CD14-positive monocyte (primary cell): ENCODE measurements at regions of chr10 and their contacts with region 1.

Region 1: DNA sequence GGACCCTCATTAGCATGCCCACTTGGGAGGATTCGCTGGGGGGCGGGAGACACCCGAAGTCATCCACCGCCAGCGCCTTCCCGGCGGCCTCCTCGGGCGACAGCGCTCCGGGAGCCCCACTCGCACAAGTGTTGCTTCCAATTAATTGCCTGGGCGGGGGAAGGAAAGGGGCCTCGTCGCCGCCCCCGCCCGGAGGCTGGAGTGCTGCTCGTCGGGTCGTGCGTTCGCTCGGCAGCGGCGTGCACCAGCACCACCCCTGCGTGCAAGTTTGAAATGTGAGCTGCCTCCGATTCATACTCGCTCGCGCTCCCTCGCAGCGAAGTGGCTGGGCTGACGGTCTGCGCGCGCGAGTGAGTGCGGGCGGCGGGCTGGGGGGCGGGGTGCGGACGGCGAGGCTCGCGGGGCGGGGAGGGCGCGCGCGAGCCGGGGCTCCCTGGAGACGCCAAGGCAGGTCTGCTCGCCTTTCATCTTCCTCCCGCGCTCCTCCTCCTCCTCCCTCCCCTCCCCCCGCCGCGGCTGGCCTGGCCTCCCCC is 104.6 kb upstream of the PPIF start:
- DNase-seq: peak; percentile 49 to 68 (median 61)
- H3K4me3 ChIP-seq: peak overlapping the region; percentile 51 to 75 (median 57)
- H3K4me3 Mint-ChIP-seq: peak overlapping the region; percentile 68 to 79
- H3K27ac ChIP-seq: peak overlapping the region; percentile 87 to 95
- H3K27ac Mint-ChIP-seq: peak overlapping the region in 6 of 7 donors; percentile 8 to 98 (median 89)
- H3K4me1 ChIP-seq: peaks cover 82 to 88% of the 10 kb centered on the region in 2 donors
- H3K4me1 Mint-ChIP-seq: peaks cover 82% of the 10 kb centered on the region
- H3K27me3 ChIP-seq: no peaks in the 10 kb centered on the region
- H3K27me3 Mint-ChIP-seq: peaks cover 0 to 2% (median 0%) of the 10 kb centered on the region in 3 donors
- CTCF ChIP-seq: no peak

Region 2: GRCh38 chr10:78255796-78256638 is 986.7 kb before region 1 on chr10:
- intact Hi-C with region 1: no loop called
- DNase-seq: peak; percentile 88 to 96 (median 94)
- H3K4me3 ChIP-seq: no peak overlapping the region
- H3K4me3 Mint-ChIP-seq: no peak overlapping the region
- H3K27ac ChIP-seq: peak overlapping the region in 1 of 2 donors; percentile 58
- H3K27ac Mint-ChIP-seq: peak overlapping the region; percentile 10 to 88 (median 72)
- H3K4me1 ChIP-seq: peaks cover 46 to 56% of the 10 kb centered on the region in 2 donors
- H3K4me1 Mint-ChIP-seq: peaks cover 68% of the 10 kb centered on the region
- H3K27me3 ChIP-seq: no peaks in the 10 kb centered on the region
- H3K27me3 Mint-ChIP-seq: peaks cover 0 to 17% (median 6%) of the 10 kb centered on the region in 3 donors
- CTCF ChIP-seq: no peak

Region 3: GRCh38 chr10:78972947-78973900 is 269.5 kb before region 1 on chr10:
- intact Hi-C with region 1: loop called in 1 of 2 experiments (anchors 10 kb)
- DNase-seq: peak; percentile 87 to 90 (median 89)
- H3K4me3 ChIP-seq: peak overlapping the region; percentile 32 to 73 (median 42)
- H3K4me3 Mint-ChIP-seq: peak overlapping the region; percentile 67 to 70
- H3K27ac ChIP-seq: peak overlapping the region; percentile 27 to 92
- H3K27ac Mint-ChIP-seq: peak overlapping the region in 6 of 7 donors; percentile 61 to 99 (median 82)
- H3K4me1 ChIP-seq: peaks cover 27 to 33% of the 10 kb centered on the region in 2 donors
- H3K4me1 Mint-ChIP-seq: peaks cover 42% of the 10 kb centered on the region
- H3K27me3 ChIP-seq: no peaks in the 10 kb centered on the region
- H3K27me3 Mint-ChIP-seq: peaks cover 5 to 21% (median 6%) of the 10 kb centered on the region in 3 donors
- CTCF ChIP-seq: no peak

Region 4: GRCh38 chr10:79178614-79179163 is 64.0 kb before region 1 on chr10:
- intact Hi-C with region 1: no loop called
- DNase-seq: no peak
- H3K4me3 ChIP-seq: no peak overlapping the region
- H3K4me3 Mint-ChIP-seq: no peak overlapping the region
- H3K27ac ChIP-seq: no peak overlapping the region
- H3K27ac Mint-ChIP-seq: no peak overlapping the region
- H3K4me1 ChIP-seq: peaks cover 0 to 25% of the 10 kb centered on the region in 2 donors
- H3K4me1 Mint-ChIP-seq: peaks cover 30% of the 10 kb centered on the region
- H3K27me3 ChIP-seq: no peaks in the 10 kb centered on the region
- H3K27me3 Mint-ChIP-seq: peaks cover 0 to 2% (median 0%) of the 10 kb centered on the region in 3 donors
- CTCF ChIP-seq: no peak

Region 5: GRCh38 chr10:79223091-79224048 is 19.3 kb before region 1 on chr10:
- intact Hi-C with region 1: no loop called
- DNase-seq: peak in 2 of 3 donors; percentile 39 to 66
- H3K4me3 ChIP-seq: no peak overlapping the region
- H3K4me3 Mint-ChIP-seq: no peak overlapping the region
- H3K27ac ChIP-seq: peak overlapping the region in 1 of 2 donors; percentile 32
- H3K27ac Mint-ChIP-seq: peak overlapping the region in 4 of 7 donors; percentile 7 to 88 (median 56)
- H3K4me1 ChIP-seq: peaks cover 0 to 6% of the 10 kb centered on the region in 2 donors
- H3K4me1 Mint-ChIP-seq: peaks cover 16% of the 10 kb centered on the region
- H3K27me3 ChIP-seq: no peaks in the 10 kb centered on the region
- H3K27me3 Mint-ChIP-seq: peaks cover 0 to 2% (median 0%) of the 10 kb centered on the region in 3 donors
- CTCF ChIP-seq: no peak

Region 6: DNA sequence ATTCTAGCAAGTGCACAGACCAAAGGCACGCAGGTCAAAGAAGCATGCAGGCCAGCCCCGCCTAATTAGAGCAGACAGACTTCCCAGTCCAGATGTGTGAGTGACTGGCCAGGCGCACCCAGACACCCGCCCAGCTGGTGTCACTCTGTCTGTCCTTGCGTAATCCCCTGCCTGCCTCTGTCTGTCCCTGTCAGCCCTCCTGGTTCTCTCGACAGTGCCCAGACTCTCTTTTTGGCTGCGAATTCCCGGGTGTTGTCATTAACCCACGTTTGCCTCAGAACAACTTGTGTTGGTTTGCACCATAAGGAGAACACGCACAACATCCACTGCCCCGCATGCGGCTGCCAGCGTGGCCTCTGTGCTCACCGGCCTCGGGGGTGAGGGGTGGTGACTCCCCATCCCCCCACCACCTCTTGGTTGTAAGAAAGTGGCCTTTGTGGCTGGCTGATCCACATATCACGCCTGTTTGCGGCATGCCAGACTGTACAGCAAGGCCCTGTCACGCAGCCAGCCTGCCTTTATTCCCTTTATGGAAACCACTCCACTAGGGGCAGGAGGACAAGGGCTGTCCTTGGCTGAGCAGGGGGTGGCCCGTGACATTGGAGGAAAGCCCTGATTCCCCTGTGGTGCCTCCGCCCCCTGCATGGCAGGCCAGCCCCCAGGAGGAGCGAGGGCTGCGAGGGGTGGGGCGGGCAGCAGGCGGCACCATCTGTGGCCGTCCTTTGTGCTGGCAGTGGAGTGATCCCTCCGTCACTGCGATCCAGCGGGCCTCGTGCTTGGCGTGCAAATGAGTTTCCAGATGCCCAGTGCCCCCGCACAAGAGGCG is 31.8 kb after region 1 on chr10:
- intact Hi-C with region 1: loop called in 1 of 2 experiments (anchors 5 kb)
- DNase-seq: peak; percentile 91 to 98 (median 95)
- H3K4me3 ChIP-seq: no peak overlapping the region
- H3K4me3 Mint-ChIP-seq: peak overlapping the region in 1 of 2 donors; percentile 48
- H3K27ac ChIP-seq: peak overlapping the region; percentile 33 to 88
- H3K27ac Mint-ChIP-seq: peak overlapping the region; percentile 68 to 99 (median 80)
- H3K4me1 ChIP-seq: peaks cover 45 to 51% of the 10 kb centered on the region in 2 donors
- H3K4me1 Mint-ChIP-seq: peaks cover 53% of the 10 kb centered on the region
- H3K27me3 ChIP-seq: no peaks in the 10 kb centered on the region
- H3K27me3 Mint-ChIP-seq: peaks cover 0 to 5% (median 1%) of the 10 kb centered on the region in 3 donors
- CTCF ChIP-seq: no peak

Region 7: GRCh38 chr10:79331709-79332108 is 89.0 kb after region 1 on chr10:
- intact Hi-C with region 1: loop called in 1 of 2 experiments (anchors 5 kb)
- DNase-seq: peak; percentile 98 to 100 (median 99)
- H3K4me3 ChIP-seq: no peak overlapping the region
- H3K4me3 Mint-ChIP-seq: peak overlapping the region; percentile 25 to 53
- H3K27ac ChIP-seq: peak overlapping the region; percentile 89 to 92
- H3K27ac Mint-ChIP-seq: peak overlapping the region; percentile 94 to 98 (median 98)
- H3K4me1 ChIP-seq: peaks cover 22 to 24% of the 10 kb centered on the region in 2 donors
- H3K4me1 Mint-ChIP-seq: peaks cover 27% of the 10 kb centered on the region
- H3K27me3 ChIP-seq: no peaks in the 10 kb centered on the region
- H3K27me3 Mint-ChIP-seq: peaks cover 5 to 9% (median 6%) of the 10 kb centered on the region in 3 donors
- CTCF ChIP-seq: no peak

Region 8: GRCh38 chr10:79358783-79359182 is 116.1 kb after region 1 on chr10:
- intact Hi-C with region 1: loop called in 1 of 2 experiments (anchors 10 kb)
- DNase-seq: no peak
- H3K4me3 ChIP-seq: no peak overlapping the region
- H3K4me3 Mint-ChIP-seq: no peak overlapping the region
- H3K27ac ChIP-seq: no peak overlapping the region
- H3K27ac Mint-ChIP-seq: peak overlapping the region in 3 of 7 donors; percentile 19 to 45 (median 25)
- H3K4me1 ChIP-seq: peaks cover 28 to 31% of the 10 kb centered on the region in 2 donors
- H3K4me1 Mint-ChIP-seq: peaks cover 39% of the 10 kb centered on the region
- H3K27me3 ChIP-seq: no peaks in the 10 kb centered on the region
- H3K27me3 Mint-ChIP-seq: peaks cover 0 to 6% (median 4%) of the 10 kb centered on the region in 3 donors
- CTCF ChIP-seq: no peak

Region 9: DNA sequence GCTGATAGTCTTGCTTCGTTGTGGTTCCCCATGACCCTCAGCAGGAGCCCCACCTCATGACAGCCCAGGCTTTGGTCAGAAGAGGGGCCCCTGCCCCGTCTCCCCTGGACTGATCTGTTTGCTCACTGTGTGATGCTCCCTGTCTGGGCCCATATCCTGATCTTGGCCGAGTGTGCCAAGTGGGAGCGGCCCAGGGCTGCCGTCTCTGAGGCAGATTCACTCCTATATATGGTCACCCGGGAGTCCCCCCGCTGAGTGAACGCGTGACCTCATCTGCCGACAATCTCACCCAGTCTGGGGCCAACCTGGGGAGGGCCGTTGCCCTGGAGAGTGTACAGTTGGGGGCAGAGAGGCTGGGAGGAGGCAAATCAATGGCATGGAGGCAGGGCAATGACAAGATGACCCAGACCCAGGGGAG is 139.1 kb after region 1 on chr10:
- intact Hi-C with region 1: no loop called
- DNase-seq: peak in 1 of 3 donors; percentile 2
- H3K4me3 ChIP-seq: no peak overlapping the region
- H3K4me3 Mint-ChIP-seq: no peak overlapping the region
- H3K27ac ChIP-seq: no peak overlapping the region
- H3K27ac Mint-ChIP-seq: no peak overlapping the region
- H3K4me1 ChIP-seq: no peaks in the 10 kb centered on the region
- H3K4me1 Mint-ChIP-seq: no peaks in the 10 kb centered on the region
- H3K27me3 ChIP-seq: no peaks in the 10 kb centered on the region
- H3K27me3 Mint-ChIP-seq: peaks cover 1 to 7% (median 2%) of the 10 kb centered on the region in 3 donors
- CTCF ChIP-seq: no peak